Naive thymus-derived CD4-positive, alpha-beta T cell (primary cell): ENCODE measurements at regions of chr2 and their contacts with region 1.

Region 1: GRCh38 chr2:59888015-59888414 is 665.4 kb downstream of the BCL11A start:
- DNase-seq: peak in 8 of 9 donors; percentile 22 to 90 (median 86)
- ATAC-seq: peak; percentile 97
- H3K4me3 ChIP-seq: no peak overlapping the region
- H3K4me3 Mint-ChIP-seq: peak overlapping the region; percentile 3 to 85 (median 72)
- H3K27ac ChIP-seq: peak overlapping the region; percentile 54
- H3K27ac Mint-ChIP-seq: peak overlapping the region; percentile 29 to 92 (median 85)
- H3K4me1 ChIP-seq: peaks cover 0 to 38% of the 10 kb centered on the region in 2 donors
- H3K4me1 Mint-ChIP-seq: peaks cover 28 to 74% (median 57%) of the 10 kb centered on the region in 7 donors
- H3K27me3 ChIP-seq: no peaks in the 10 kb centered on the region
- H3K27me3 Mint-ChIP-seq: peaks cover 0 to 16% (median 0%) of the 10 kb centered on the region in 5 donors

Region 2: DNA sequence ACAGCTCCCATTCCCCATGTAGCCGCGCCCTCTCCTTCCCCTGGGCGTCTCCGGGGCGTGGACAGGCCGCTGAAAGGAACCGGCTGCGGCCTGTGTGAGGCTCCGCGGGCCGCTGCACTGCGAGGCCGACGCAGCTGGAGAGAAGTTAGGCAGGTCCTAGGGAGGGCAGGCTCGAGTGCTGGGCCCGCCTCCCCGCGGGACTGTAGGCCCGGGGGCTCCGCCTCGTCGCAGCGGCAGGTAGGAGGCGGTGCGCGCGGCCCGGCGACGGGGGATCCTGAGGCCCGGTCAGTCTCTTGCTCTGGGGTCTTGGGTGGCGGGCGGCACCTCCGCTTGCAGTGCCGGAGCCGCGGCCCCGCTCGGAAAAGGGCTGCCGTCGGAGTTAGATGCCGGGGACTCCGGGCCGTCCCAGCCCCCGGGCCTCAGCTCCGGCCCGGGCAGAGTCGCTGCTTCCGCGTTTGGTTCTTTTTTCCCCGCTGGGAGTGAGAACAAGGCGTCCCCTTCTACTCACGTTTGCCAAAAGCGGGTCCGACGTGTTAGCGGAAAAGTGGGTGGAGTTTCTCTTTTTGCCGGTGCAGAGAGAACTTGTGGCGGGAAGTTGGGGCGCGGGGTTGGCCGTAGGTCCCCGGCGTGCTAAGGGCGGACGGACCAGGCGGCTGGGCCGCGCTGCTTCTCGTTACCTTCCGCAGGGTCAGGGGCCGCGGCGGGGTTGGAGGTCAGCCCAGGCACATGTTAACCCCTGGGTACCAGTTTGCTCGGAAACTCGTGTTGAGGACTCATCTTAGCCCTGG is 1841.2 kb before region 1 on chr2 and contains the start of gene VRK2:
- CTCF ChIA-PET with region 1: no interaction called
- POLR2A ChIA-PET with region 1: no interaction called
- intact Hi-C with region 1: loop called in 1 of 2 experiments (anchors 5 kb)
- DNase-seq: peak; percentile 72 to 86 (median 85)
- ATAC-seq: peak; percentile 94
- H3K4me3 ChIP-seq: peak within 1 kb of the TSS; percentile 67
- H3K4me3 Mint-ChIP-seq: peak within 1 kb of the TSS; percentile 87 to 94 (median 92)
- H3K27ac ChIP-seq: peak within 1 kb of the TSS; percentile 84
- H3K27ac Mint-ChIP-seq: peak within 1 kb of the TSS; percentile 91 to 97 (median 94)
- H3K4me1 ChIP-seq: peaks cover 18 to 20% of the 10 kb centered on the region in 2 donors
- H3K4me1 Mint-ChIP-seq: peaks cover 27 to 55% (median 51%) of the 10 kb centered on the region in 7 donors
- H3K27me3 ChIP-seq: no peaks in the 10 kb centered on the region
- H3K27me3 Mint-ChIP-seq: no peaks in the 10 kb centered on the region
- total RNA-seq, gene VRK2: 13.1 to 24.5 (median 14.1) TPM

Region 3: DNA sequence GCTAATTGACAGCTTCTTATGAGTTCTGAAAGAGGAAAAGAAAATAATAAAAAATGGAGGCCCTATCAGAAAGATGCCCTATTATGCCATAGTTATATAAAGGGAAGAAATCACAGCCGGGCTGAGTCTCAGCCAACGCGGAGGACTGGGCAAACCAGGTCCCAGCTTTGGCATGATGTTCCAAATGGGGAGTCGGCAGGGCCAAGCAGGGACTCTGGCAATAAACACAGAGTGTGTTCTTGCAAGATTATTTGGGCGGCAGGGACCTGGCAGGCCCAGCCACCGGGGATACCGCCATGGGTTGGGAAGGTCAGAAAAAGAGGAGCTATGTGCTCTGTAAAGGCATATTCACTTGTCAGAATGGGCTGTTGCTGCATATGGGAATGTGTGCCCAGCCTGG is 29.5 kb before region 1 on chr2:
- CTCF ChIA-PET with region 1: no interaction called
- POLR2A ChIA-PET with region 1: no interaction called
- intact Hi-C with region 1: no loop called
- DNase-seq: no peak
- ATAC-seq: no peak
- H3K4me3 ChIP-seq: no peak overlapping the region
- H3K4me3 Mint-ChIP-seq: no peak overlapping the region
- H3K27ac ChIP-seq: no peak overlapping the region
- H3K27ac Mint-ChIP-seq: no peak overlapping the region
- H3K4me1 ChIP-seq: no peaks in the 10 kb centered on the region
- H3K4me1 Mint-ChIP-seq: no peaks in the 10 kb centered on the region
- H3K27me3 ChIP-seq: no peaks in the 10 kb centered on the region
- H3K27me3 Mint-ChIP-seq: no peaks in the 10 kb centered on the region

Region 4: DNA sequence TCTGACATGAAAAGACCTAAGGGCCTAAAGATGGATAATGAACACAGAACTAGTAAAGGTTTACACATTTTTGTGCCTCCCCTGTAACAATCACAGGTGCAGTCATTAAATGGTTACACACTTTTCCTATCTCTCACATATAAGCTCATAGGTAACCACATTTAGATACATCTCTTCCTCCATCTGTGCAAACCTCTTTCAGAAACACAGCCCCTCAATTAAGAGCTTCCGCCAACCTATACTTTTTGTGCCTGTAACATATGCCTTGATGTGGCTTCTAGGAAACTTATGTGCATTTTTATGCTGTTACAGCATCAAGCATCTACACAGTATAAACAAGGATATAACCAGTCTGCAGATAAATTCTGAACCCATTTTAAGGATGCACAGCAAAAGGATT is 22.2 kb after region 1 on chr2:
- CTCF ChIA-PET with region 1: interaction called, 3 read pairs
- POLR2A ChIA-PET with region 1: interaction called, 11 read pairs
- intact Hi-C with region 1: loop called in 1 of 2 experiments (anchors 1 kb)
- DNase-seq: no peak
- ATAC-seq: no peak
- H3K4me3 ChIP-seq: no peak overlapping the region
- H3K4me3 Mint-ChIP-seq: peak overlapping the region in 2 of 10 donors; percentile 0 to 10
- H3K27ac ChIP-seq: no peak overlapping the region
- H3K27ac Mint-ChIP-seq: peak overlapping the region in 3 of 9 donors; percentile 2 to 23 (median 19)
- H3K4me1 ChIP-seq: no peaks in the 10 kb centered on the region
- H3K4me1 Mint-ChIP-seq: peaks cover 5 to 25% (median 22%) of the 10 kb centered on the region in 7 donors
- H3K27me3 ChIP-seq: no peaks in the 10 kb centered on the region
- H3K27me3 Mint-ChIP-seq: no peaks in the 10 kb centered on the region

Region 5: GRCh38 chr2:59932341-59932740 is 44.3 kb after region 1 on chr2:
- CTCF ChIA-PET with region 1: interaction called, 3 read pairs
- POLR2A ChIA-PET with region 1: interaction called, 3 read pairs
- intact Hi-C with region 1: loop called in 1 of 2 experiments (anchors 1 kb)
- DNase-seq: no peak
- ATAC-seq: no peak
- H3K4me3 ChIP-seq: no peak overlapping the region
- H3K4me3 Mint-ChIP-seq: no peak overlapping the region
- H3K27ac ChIP-seq: no peak overlapping the region
- H3K27ac Mint-ChIP-seq: no peak overlapping the region
- H3K4me1 ChIP-seq: no peaks in the 10 kb centered on the region
- H3K4me1 Mint-ChIP-seq: peaks cover 0 to 8% (median 4%) of the 10 kb centered on the region in 7 donors
- H3K27me3 ChIP-seq: no peaks in the 10 kb centered on the region
- H3K27me3 Mint-ChIP-seq: no peaks in the 10 kb centered on the region

Region 6: DNA sequence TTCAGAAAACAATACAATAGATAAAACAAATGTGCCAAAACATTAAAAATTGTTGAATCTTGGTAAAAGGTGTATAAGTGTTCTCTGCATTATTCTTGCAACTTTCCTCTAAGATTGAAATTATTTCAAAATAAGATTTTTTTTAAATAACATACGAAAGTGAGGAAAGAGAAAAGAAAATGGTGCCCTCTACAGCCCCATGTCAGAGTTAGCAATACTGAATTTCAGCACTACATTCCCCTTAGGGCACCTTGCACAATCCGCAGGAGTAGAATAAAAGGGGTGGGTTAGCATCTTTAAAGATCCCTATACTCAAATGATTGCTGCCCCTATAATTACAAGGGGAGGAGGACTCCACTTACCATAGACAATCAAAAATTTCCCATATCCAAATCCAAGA is 231.8 kb after region 1 on chr2:
- CTCF ChIA-PET with region 1: no interaction called
- POLR2A ChIA-PET with region 1: no interaction called
- intact Hi-C with region 1: loop called in 1 of 2 experiments (anchors 5 kb)
- DNase-seq: no peak
- ATAC-seq: no peak
- H3K4me3 ChIP-seq: no peak overlapping the region
- H3K4me3 Mint-ChIP-seq: no peak overlapping the region
- H3K27ac ChIP-seq: no peak overlapping the region
- H3K27ac Mint-ChIP-seq: no peak overlapping the region
- H3K4me1 ChIP-seq: no peaks in the 10 kb centered on the region
- H3K4me1 Mint-ChIP-seq: no peaks in the 10 kb centered on the region
- H3K27me3 ChIP-seq: no peaks in the 10 kb centered on the region
- H3K27me3 Mint-ChIP-seq: peaks cover 2 to 25% (median 14%) of the 10 kb centered on the region in 5 donors

Region 7: DNA sequence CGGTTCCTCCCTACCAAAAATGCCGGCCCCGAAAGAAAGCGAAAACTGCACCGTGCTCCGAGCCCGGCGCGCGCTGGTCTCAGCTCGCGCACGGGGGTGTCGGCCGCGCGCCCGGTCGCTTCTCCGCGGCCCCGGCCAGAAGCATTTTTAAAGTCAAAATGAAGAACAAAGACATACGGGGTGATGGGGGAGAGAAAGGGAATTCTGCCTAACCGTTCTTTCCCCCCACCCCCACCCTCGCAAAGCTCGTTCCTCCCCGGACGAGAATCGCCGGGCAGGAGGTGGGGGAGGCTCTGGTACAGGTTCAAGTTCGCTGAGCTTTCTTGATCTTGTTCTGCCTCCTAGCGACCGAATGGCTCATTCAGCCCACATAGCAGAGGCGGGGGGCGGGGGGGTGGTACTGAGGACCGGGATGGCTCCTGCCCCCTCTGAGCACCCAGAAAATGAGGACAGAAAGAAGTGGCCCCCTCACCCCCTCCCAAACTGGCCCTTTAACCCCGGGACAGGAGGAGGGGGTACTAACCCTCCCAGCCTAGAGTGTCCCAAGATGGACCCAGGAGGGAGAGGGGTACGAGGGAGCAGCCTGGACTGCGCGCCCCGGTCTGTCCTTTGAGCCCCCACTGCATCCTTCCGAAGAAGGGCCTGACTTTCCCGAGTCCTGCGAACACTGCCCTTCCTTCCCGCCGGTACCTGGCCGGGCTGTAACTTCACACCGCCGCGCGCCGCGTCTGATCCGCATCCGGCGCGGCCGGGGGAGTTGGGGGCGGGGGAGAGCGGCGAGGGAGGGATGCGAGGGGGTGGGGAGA is 662.4 kb after region 1 on chr2:
- CTCF ChIA-PET with region 1: interaction called, 4 read pairs
- POLR2A ChIA-PET with region 1: no interaction called
- intact Hi-C with region 1: loop called (anchors 2 to 10 kb)
- DNase-seq: peak in 8 of 9 donors; percentile 23 to 67 (median 50)
- ATAC-seq: peak; percentile 71
- H3K4me3 ChIP-seq: peak overlapping the region; percentile 70
- H3K4me3 Mint-ChIP-seq: peak overlapping the region; percentile 80 to 93 (median 90)
- H3K27ac ChIP-seq: peak overlapping the region; percentile 39
- H3K27ac Mint-ChIP-seq: peak overlapping the region in 6 of 9 donors; percentile 29 to 89 (median 68)
- H3K4me1 ChIP-seq: peaks cover 9 to 17% of the 10 kb centered on the region in 2 donors
- H3K4me1 Mint-ChIP-seq: peaks cover 11 to 57% (median 34%) of the 10 kb centered on the region in 7 donors
- H3K27me3 ChIP-seq: peaks cover 10 to 39% of the 10 kb centered on the region in 2 donors
- H3K27me3 Mint-ChIP-seq: peaks cover 46 to 87% (median 55%) of the 10 kb centered on the region in 5 donors